ENCODE measurements at regions of chr6 and their contacts with region 1.

Region 1: GRCh38 chr6:7615611-7616383 is 25.8 kb downstream of the SNRNP48 start:
- DNase-seq: peak; percentile 20 to 42 (median 35)
- H3K4me3 ChIP-seq: no peak overlapping the region
- H3K4me3 Mint-ChIP-seq: peak overlapping the region; percentile 39 to 66
- H3K27ac ChIP-seq: no peak overlapping the region
- H3K27ac Mint-ChIP-seq: peak overlapping the region in 4 of 7 donors; percentile 3 to 79 (median 26)
- H3K4me1 ChIP-seq: peaks cover 15 to 20% of the 10 kb centered on the region in 2 donors
- H3K4me1 Mint-ChIP-seq: peaks cover 29% of the 10 kb centered on the region
- H3K27me3 ChIP-seq: no peaks in the 10 kb centered on the region
- H3K27me3 Mint-ChIP-seq: peaks cover 3 to 6% (median 4%) of the 10 kb centered on the region in 3 donors
- CTCF ChIP-seq: peak; percentile 86

Region 2: DNA sequence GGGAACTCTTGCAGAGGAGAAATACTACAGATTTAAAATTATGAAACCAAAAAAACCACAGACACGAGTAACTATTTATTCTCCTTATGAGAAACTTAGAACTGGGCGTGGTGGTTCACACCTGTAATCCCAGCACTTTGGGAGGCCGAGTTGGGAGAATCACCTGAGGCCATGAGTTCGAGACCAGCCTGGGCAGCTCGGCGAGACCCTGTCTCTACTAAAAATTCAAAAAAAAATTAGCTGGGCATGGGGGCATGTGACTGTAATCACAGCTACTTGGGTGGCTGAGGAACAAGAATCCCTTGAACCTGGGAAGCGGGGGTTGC is 339.6 kb before region 1 on chr6:
- intact Hi-C with region 1: loop called in 1 of 2 experiments (anchors 2 kb)
- DNase-seq: no peak
- H3K4me3 ChIP-seq: no peak overlapping the region
- H3K4me3 Mint-ChIP-seq: no peak overlapping the region
- H3K27ac ChIP-seq: no peak overlapping the region
- H3K27ac Mint-ChIP-seq: peak overlapping the region in 1 of 7 donors; percentile 46
- H3K4me1 ChIP-seq: peaks cover 35 to 39% of the 10 kb centered on the region in 2 donors
- H3K4me1 Mint-ChIP-seq: peaks cover 44% of the 10 kb centered on the region
- H3K27me3 ChIP-seq: no peaks in the 10 kb centered on the region
- H3K27me3 Mint-ChIP-seq: peaks cover 1 to 4% (median 2%) of the 10 kb centered on the region in 3 donors
- CTCF ChIP-seq: peak; percentile 60

Region 3: DNA sequence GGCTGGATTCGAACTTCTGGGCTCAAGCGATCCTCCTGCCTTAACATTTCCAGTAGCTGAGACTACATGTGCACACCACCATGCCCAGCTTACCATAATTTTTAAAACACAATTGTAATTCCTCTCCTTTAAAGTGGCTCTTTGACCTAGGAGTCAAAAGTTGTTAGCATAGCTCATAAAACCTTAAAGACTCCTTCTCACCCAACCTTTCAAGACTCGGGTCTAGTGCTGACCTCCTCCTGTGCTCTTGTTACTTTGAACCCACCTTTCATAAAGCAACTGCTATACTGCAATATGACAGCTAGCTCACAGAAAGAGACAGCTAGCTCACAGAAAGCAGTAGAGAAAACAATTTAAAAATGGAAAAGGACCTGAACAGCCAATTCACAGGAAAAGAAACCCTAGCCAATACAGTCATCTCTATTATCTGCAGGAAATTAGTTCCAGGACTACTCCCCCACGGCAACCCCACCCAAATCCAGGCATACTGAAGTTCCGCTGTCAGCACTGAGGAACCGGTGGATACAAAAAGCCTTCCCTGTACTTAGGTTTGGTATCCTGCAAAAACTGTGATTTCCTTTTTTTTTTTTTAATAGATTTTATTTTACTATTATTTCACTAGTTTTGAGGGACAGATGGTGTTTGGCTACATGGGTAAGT is 323.1 kb before region 1 on chr6:
- intact Hi-C with region 1: loop called in 1 of 2 experiments (anchors 10 kb)
- DNase-seq: no peak
- H3K4me3 ChIP-seq: no peak overlapping the region
- H3K4me3 Mint-ChIP-seq: no peak overlapping the region
- H3K27ac ChIP-seq: no peak overlapping the region
- H3K27ac Mint-ChIP-seq: peak overlapping the region in 4 of 7 donors; percentile 5 to 61 (median 39)
- H3K4me1 ChIP-seq: no peaks in the 10 kb centered on the region
- H3K4me1 Mint-ChIP-seq: no peaks in the 10 kb centered on the region
- H3K27me3 ChIP-seq: no peaks in the 10 kb centered on the region
- H3K27me3 Mint-ChIP-seq: no peaks in the 10 kb centered on the region
- CTCF ChIP-seq: no peak

Region 4: DNA sequence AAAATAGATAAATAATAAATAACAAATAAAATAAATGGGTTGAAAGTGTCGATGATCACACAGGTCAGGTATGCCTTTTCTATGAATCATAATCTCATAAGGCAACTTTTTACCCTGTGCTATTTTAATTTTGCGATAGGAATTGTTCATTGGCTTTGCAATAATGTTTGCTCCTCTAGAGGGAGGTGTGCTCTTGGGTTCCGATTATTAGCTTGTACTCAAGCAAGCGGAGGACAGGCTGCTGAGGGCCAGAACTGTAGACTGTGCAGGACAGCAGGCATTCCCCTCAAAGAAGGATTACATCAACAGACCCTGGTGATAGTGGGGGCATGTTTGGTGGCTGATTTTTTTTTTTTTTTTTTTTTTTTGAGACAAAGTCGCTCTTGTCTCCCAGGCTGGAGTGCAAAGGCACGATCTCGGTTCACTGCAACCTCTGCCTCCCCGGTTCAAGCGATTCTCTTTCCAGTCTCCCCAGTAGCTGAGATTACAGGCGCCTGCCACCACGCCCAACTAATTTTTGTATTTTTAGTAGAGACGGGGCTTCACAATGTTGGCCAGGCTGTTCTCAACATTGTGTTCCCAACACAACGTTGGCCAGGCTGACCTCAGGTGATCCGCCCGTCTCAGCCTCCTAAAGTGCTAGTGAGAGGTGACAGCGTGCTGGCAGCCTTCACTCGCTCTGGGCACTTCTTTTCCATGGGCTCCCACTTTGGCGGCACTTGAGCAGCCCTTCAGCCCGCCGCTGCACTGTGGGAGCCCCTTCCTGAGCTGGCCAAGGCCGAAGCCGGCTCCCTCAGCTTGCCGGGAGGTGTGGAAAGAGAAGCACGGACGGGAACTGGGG is 190.6 kb before region 1 on chr6:
- intact Hi-C with region 1: loop called (anchors 10 kb)
- DNase-seq: peak in 2 of 3 donors; percentile 19 to 33
- H3K4me3 ChIP-seq: no peak overlapping the region
- H3K4me3 Mint-ChIP-seq: no peak overlapping the region
- H3K27ac ChIP-seq: no peak overlapping the region
- H3K27ac Mint-ChIP-seq: no peak overlapping the region
- H3K4me1 ChIP-seq: no peaks in the 10 kb centered on the region
- H3K4me1 Mint-ChIP-seq: peaks cover 2% of the 10 kb centered on the region
- H3K27me3 ChIP-seq: no peaks in the 10 kb centered on the region
- H3K27me3 Mint-ChIP-seq: peaks cover 0 to 2% (median 0%) of the 10 kb centered on the region in 3 donors
- CTCF ChIP-seq: peak; percentile 32

Region 5: GRCh38 chr6:7431674-7432390 is 184.0 kb before region 1 on chr6:
- intact Hi-C with region 1: loop called (anchors 10 kb)
- DNase-seq: no peak
- H3K4me3 ChIP-seq: no peak overlapping the region
- H3K4me3 Mint-ChIP-seq: peak overlapping the region; percentile 69 to 79
- H3K27ac ChIP-seq: no peak overlapping the region
- H3K27ac Mint-ChIP-seq: peak overlapping the region; percentile 15 to 85 (median 74)
- H3K4me1 ChIP-seq: peaks cover 12 to 24% of the 10 kb centered on the region in 2 donors
- H3K4me1 Mint-ChIP-seq: peaks cover 32% of the 10 kb centered on the region
- H3K27me3 ChIP-seq: no peaks in the 10 kb centered on the region
- H3K27me3 Mint-ChIP-seq: peaks cover 0 to 1% (median 0%) of the 10 kb centered on the region in 3 donors
- CTCF ChIP-seq: no peak